SK-N-SH (cell line): ENCODE measurements at regions of chr6 and their contacts with region 1.

Region 1: GRCh38 chr6:30541515-30542403 is 14.5 kb downstream of the GNL1 start:
- DNase-seq: peak; percentile 66
- H3K4me3 ChIP-seq: peak overlapping the region; percentile 39 to 55
- H3K27ac ChIP-seq: no peak overlapping the region
- H3K4me1 ChIP-seq: peaks cover 3 to 5% of the 10 kb centered on the region in 2 experiments; a peak in 1 of 4 replicates
- H3K27me3 ChIP-seq: no peaks in the 10 kb centered on the region
- CTCF ChIP-seq: peak; percentile 99
- EP300 ChIP-seq: no peak
- RAD21 ChIP-seq: peak; percentile 73

Region 2: GRCh38 chr6:30463651-30464618 is 77.8 kb before region 1 on chr6:
- CTCF ChIA-PET with region 1: interaction called, 11 read pairs
- POLR2A ChIA-PET with region 1: no interaction called
- DNase-seq: no peak
- H3K4me3 ChIP-seq: no peak overlapping the region
- H3K27ac ChIP-seq: no peak overlapping the region
- H3K4me1 ChIP-seq: no peaks in the 10 kb centered on the region; a peak in 1 of 4 replicates
- H3K27me3 ChIP-seq: peaks cover 92% of the 10 kb centered on the region
- CTCF ChIP-seq: no peak
- EP300 ChIP-seq: no peak
- RAD21 ChIP-seq: no peak

Region 3: DNA sequence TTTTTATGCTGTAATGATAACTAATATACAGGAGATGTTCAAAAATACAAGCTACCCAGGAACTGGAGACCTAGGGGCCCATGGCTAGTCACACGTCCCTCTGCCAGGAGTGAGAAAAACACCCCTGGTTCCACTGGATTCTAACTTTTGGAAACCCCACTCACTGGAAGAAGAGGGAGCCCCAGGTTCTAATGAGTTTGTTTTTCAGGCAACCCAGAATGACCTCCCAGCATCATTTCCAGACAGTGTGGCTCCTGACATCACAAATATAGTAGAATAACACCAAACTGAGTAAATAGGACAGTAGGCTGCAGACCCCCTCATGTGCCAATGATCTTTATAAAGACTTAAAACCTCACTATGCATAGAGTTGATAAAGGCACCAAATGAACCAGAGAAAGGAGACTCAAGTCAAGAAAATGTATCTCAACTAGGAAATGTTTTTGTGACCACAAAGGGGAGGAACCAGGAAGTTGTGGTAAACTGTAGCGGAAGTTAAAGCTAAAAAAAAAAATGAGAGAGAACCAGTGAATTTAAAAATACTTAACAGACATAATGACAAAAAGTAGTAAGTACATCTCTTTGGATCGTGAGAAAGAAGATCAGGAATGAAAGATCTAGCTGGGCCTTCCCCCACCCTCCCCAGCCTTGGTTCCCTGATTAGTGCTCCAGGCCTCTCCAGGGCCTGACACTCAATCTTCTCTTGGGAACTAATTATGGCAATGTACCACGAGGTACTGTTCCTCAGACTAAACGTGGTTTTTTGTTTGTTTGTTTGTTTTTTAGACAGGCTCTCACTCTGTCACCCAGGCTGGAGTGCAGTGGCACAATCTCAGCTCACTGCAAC is 32.6 kb before region 1 on chr6:
- CTCF ChIA-PET with region 1: interaction called, 18 read pairs
- POLR2A ChIA-PET with region 1: no interaction called
- DNase-seq: no peak
- H3K4me3 ChIP-seq: no peak overlapping the region
- H3K27ac ChIP-seq: peak overlapping the region in 1 of 2 experiments; percentile 6; a peak in 1 of 4 replicates
- H3K4me1 ChIP-seq: no peaks in the 10 kb centered on the region
- H3K27me3 ChIP-seq: no peaks in the 10 kb centered on the region
- CTCF ChIP-seq: no peak
- EP300 ChIP-seq: no peak
- RAD21 ChIP-seq: no peak

Region 4: GRCh38 chr6:30565772-30566171 is 24.0 kb after region 1 on chr6:
- CTCF ChIA-PET with region 1: interaction called, 16 read pairs
- POLR2A ChIA-PET with region 1: interaction called, 6 read pairs
- DNase-seq: no peak
- H3K4me3 ChIP-seq: no peak overlapping the region
- H3K27ac ChIP-seq: no peak overlapping the region
- H3K4me1 ChIP-seq: peaks cover 0 to 9% of the 10 kb centered on the region in 2 experiments; a peak in 1 of 4 replicates
- H3K27me3 ChIP-seq: no peaks in the 10 kb centered on the region
- CTCF ChIP-seq: no peak
- EP300 ChIP-seq: no peak
- RAD21 ChIP-seq: no peak

Region 5: GRCh38 chr6:30578051-30578450 is 36.3 kb after region 1 on chr6:
- CTCF ChIA-PET with region 1: interaction called, 17 read pairs
- POLR2A ChIA-PET with region 1: no interaction called
- DNase-seq: no peak
- H3K4me3 ChIP-seq: no peak overlapping the region
- H3K27ac ChIP-seq: no peak overlapping the region
- H3K4me1 ChIP-seq: peaks cover 4 to 6% of the 10 kb centered on the region in 2 experiments; a peak in 3 of 4 replicates
- H3K27me3 ChIP-seq: no peaks in the 10 kb centered on the region
- CTCF ChIP-seq: no peak
- EP300 ChIP-seq: no peak
- RAD21 ChIP-seq: no peak

Region 6: DNA sequence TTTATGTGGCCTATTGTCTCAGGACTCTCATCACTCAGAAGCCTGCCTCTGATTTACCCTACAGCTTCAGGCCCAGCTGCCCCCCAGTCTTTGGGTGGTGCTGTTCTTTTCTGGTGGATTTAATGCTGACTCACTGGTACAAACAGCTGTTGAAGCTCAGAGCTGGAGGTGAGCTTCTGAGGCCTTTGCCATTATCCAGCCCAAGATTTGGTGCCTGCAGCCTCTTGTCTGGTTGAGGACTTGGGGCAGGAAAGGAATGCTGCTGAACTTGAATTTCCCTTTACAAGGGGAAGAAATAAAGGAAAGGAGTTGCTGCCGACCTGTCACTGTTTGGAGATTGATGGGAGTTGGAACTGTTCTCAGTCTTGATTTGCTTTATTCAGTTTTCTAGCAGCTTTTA is 49.2 kb after region 1 on chr6:
- CTCF ChIA-PET with region 1: interaction called, 118 read pairs
- POLR2A ChIA-PET with region 1: no interaction called
- DNase-seq: no peak
- H3K4me3 ChIP-seq: no peak overlapping the region
- H3K27ac ChIP-seq: peak overlapping the region in 1 of 2 experiments; percentile 7; a peak in 1 of 4 replicates
- H3K4me1 ChIP-seq: no peaks in the 10 kb centered on the region
- H3K27me3 ChIP-seq: no peaks in the 10 kb centered on the region
- CTCF ChIP-seq: no peak
- EP300 ChIP-seq: no peak
- RAD21 ChIP-seq: no peak

Region 7: DNA sequence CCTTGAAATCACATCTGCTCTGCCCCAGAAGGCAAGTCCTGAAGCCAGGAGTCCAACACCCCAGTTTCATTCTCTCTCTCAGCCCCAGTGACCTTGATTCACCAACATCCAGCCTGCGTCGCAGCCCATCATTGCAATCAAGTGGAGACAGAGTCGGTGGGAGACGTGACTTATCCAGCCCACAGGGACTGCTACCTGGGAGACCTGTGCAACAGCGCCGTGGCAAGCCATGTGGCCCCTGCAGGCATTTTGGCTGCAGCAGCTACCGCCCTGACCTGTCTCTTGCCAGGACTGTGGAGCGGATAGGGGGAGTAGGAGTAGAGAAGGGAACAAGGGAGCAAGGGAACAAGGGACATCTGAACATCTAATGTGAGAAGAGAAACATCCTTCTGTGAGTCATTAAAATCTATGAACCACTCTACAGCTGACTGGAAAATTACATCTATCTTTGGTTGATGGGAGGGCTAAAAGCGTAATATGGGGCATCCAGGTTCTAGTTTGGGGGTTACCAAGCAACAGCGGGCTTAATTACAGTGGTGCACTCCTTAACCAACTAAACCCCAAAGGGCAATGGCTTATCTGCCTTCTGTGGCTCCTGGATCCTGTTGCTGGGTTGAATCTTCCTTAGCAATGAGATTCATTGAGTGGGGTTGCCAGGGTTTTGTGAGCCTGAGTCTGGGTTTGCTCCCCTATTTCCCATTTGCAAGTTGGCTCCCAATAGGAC is 1175.9 kb after region 1 on chr6:
- CTCF ChIA-PET with region 1: no interaction called
- POLR2A ChIA-PET with region 1: no interaction called
- DNase-seq: no peak
- H3K4me3 ChIP-seq: no peak overlapping the region
- H3K27ac ChIP-seq: no peak overlapping the region
- H3K4me1 ChIP-seq: no peaks in the 10 kb centered on the region
- H3K27me3 ChIP-seq: no peaks in the 10 kb centered on the region
- CTCF ChIP-seq: no peak
- EP300 ChIP-seq: no peak
- RAD21 ChIP-seq: no peak